MCF 10A (cell line): ENCODE measurements at regions of chr10 and their contacts with region 1.

Region 1: DNA sequence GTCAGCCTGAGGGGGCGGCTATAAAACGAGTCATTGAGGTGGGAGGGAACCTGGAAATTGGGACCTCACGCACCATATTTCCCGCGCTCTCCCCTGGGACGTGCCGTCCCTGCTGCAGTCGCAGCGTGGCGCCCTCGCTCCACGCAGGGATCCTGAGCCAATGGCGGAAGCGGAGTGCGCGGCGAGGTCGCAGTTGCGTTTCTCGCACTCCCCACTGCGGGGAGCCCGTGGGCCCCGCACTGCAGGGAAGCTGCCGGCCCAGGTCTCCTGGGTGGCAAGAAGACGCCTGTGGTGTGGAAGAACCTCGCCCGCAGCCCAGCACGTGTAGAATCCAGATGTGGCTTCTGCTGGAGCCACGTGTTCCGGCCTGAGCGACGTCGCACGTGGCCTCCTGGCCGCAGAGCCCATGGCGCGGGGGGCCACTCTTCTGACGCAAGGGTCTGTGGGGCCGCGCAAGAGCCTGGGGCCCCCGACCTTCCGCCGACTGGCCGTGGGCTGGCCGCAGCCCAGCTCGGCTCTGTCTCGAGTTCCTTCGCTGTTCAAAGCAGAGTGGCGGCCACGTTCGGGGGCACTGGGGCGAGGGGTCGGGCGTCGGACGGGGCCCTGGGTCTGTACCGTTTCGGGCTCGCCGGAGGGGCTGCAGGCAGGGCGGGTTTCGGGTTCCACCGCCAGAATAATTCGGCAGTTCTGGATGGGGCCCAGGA is 26.4 kb downstream of the HIF1AN start:
- DNase-seq: peak; percentile 44
- H3K4me3 Mint-ChIP-seq: no peak overlapping the region
- H3K27ac Mint-ChIP-seq: no peak overlapping the region
- H3K4me1 Mint-ChIP-seq: peaks cover 4% of the 10 kb centered on the region
- H3K27me3 Mint-ChIP-seq: no peaks in the 10 kb centered on the region
- CTCF ChIP-seq: peak; percentile 87

Region 2: DNA sequence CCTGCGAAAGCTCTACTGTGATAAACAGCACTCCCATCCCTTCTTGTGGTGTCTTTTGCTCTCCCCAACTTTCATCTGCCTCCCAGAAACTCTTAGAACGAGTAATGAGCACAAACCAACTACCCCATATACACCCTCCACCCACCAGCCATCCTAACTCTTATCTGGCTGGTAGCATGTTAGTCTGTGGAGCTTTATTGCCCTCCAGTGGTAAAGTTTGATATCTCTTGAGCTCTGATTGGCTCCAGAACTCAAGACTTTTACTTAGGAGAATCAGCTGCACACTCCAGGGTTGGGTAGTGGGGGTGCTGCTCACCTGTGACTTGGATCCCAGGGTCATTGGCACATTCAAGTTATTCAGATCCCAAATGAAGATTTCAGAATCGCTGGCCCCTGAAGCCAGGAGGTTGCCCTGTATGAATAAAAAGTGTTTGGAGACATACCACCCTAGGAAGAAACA is 53.4 kb before region 1 on chr10:
- CTCF ChIA-PET with region 1: no interaction called
- POLR2A ChIA-PET with region 1: no interaction called
- intact Hi-C with region 1: no loop called
- DNase-seq: peak; percentile 59
- H3K4me3 Mint-ChIP-seq: no peak overlapping the region
- H3K27ac Mint-ChIP-seq: no peak overlapping the region
- H3K4me1 Mint-ChIP-seq: no peaks in the 10 kb centered on the region
- H3K27me3 Mint-ChIP-seq: no peaks in the 10 kb centered on the region
- CTCF ChIP-seq: peak; percentile 62

Region 3: GRCh38 chr10:100728928-100729861 is 167.0 kb after region 1 on chr10:
- CTCF ChIA-PET with region 1: no interaction called
- POLR2A ChIA-PET with region 1: no interaction called
- intact Hi-C with region 1: loop called (anchors 5 kb)
- DNase-seq: no peak
- H3K4me3 Mint-ChIP-seq: no peak overlapping the region
- H3K27ac Mint-ChIP-seq: no peak overlapping the region
- H3K4me1 Mint-ChIP-seq: peaks cover 7% of the 10 kb centered on the region
- H3K27me3 Mint-ChIP-seq: peaks cover 60% of the 10 kb centered on the region
- CTCF ChIP-seq: no peak

Region 4: GRCh38 chr10:100743626-100744135 is 181.5 kb after region 1 on chr10:
- CTCF ChIA-PET with region 1: interaction called, 17 read pairs
- POLR2A ChIA-PET with region 1: no interaction called
- intact Hi-C with region 1: loop called (anchors 1 kb)
- DNase-seq: peak; percentile 70
- H3K4me3 Mint-ChIP-seq: no peak overlapping the region
- H3K27ac Mint-ChIP-seq: no peak overlapping the region
- H3K4me1 Mint-ChIP-seq: peaks cover 7% of the 10 kb centered on the region
- H3K27me3 Mint-ChIP-seq: peaks cover 94% of the 10 kb centered on the region
- CTCF ChIP-seq: peak; percentile 76

Region 5: DNA sequence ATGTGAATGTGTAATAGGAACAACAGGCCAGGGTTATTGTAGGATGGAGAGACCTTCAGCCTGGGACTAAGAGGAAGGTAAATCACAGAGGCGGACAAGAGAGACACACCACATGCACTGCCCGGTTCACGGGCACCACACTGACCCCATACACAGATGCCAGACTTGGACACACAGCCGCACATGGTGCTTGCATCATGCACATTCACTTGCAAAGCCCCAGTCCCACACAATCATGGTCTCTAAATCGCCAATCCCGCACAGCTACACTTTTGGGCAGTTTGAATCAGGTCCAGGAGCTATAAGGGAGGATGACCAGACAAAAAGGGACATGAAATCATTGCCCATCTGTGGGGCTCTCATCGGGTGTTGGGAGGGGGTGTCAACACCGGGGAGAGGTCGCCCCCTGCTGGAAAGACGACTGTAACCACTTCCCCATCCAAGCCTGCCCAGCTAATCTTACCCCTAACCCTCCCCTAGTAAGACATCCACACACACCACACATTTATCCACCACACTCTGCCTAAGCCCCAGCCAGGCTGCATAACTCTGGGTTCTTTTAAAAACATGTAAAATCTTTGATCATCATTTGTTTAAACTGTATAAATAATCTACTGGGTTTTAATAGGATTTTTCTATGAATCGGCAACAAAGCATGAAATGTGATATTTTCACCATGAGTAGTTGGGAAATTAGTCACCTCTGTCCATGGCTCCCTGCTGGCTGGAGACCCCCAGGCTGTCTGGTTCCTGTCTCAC is 310.1 kb after region 1 on chr10:
- CTCF ChIA-PET with region 1: interaction called, 8 read pairs
- POLR2A ChIA-PET with region 1: no interaction called
- intact Hi-C with region 1: loop called (anchors 1 kb)
- DNase-seq: peak; percentile 65
- H3K4me3 Mint-ChIP-seq: no peak overlapping the region
- H3K27ac Mint-ChIP-seq: no peak overlapping the region
- H3K4me1 Mint-ChIP-seq: no peaks in the 10 kb centered on the region
- H3K27me3 Mint-ChIP-seq: peaks cover 5% of the 10 kb centered on the region
- CTCF ChIP-seq: peak; percentile 65